H1 (cell line): ENCODE measurements at regions of chr9 and their contacts with region 1.

Region 1: GRCh38 chr9:107465467-107466451 is 23.8 kb downstream of the KLF4 start:
- DNase-seq: peak in 1 of 2 experiments; percentile 80
- H3K4me3 ChIP-seq: peak overlapping the region; percentile 47 to 75 (median 58)
- H3K27ac ChIP-seq: no peak overlapping the region
- H3K4me1 ChIP-seq: peaks cover 0 to 5% (median 5%) of the 10 kb centered on the region in 4 experiments; a peak in 4 of 7 replicates
- H3K27me3 ChIP-seq: peaks cover 0 to 19% (median 17%) of the 10 kb centered on the region in 4 experiments; a peak in 6 of 7 replicates
- CTCF ChIP-seq: peak; percentile 73 to 79 (median 76)
- EP300 ChIP-seq: no peak
- POLR2A ChIP-seq: no peak
- RAD21 ChIP-seq: peak; percentile 83 to 87

Region 2: DNA sequence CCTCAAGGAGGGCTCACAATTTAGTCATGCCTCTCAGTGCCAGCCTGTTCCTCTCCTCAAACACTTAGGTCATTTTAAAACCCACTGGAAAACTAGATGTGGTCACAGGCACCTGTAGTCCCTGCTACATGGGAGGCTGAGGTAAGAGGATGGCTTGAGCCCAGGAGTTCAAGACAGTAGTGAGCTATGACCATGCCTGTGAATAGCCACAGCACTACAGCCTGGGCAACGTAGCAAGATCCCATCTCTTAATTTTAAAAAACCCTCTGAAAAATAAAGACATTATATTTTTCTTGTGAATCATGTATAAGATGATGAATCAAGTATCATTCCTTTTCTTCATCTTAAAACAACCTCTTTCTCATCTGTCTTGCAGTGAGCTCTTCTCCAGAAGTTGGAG is 22.0 kb before region 1 on chr9:
- CTCF ChIA-PET with region 1: interaction called, 23 read pairs
- POLR2A ChIA-PET with region 1: no interaction called
- DNase-seq: no peak
- H3K4me3 ChIP-seq: no peak overlapping the region
- H3K27ac ChIP-seq: no peak overlapping the region
- H3K4me1 ChIP-seq: peaks cover under 1 to 4% (median 2%) of the 10 kb centered on the region in 4 experiments; a peak in 4 of 7 replicates
- H3K27me3 ChIP-seq: no peaks in the 10 kb centered on the region
- CTCF ChIP-seq: no peak
- EP300 ChIP-seq: no peak
- POLR2A ChIP-seq: no peak
- RAD21 ChIP-seq: no peak

Region 3: DNA sequence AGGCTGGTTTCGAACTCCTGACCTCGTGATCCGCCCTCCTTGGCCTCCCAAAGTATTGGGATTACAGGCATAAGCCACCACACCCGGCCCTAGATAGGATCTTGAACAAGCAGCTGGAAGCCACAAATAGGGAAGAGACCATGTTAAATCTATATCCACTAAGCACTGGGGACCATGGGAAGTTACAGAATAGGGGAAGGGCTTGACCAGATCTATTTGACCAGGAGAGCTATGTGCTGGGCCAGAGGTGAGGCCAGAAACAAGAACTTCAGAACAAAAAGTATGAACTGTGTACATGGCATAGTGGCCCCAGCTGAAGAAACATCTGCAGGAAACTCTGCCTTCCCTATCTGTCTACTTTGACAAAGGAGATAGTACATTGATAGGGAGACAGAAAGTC is 13.0 kb after region 1 on chr9:
- CTCF ChIA-PET with region 1: interaction called, 12 read pairs
- POLR2A ChIA-PET with region 1: no interaction called
- DNase-seq: no peak
- H3K4me3 ChIP-seq: no peak overlapping the region
- H3K27ac ChIP-seq: no peak overlapping the region
- H3K4me1 ChIP-seq: no peaks in the 10 kb centered on the region
- H3K27me3 ChIP-seq: no peaks in the 10 kb centered on the region
- CTCF ChIP-seq: no peak
- EP300 ChIP-seq: no peak
- POLR2A ChIP-seq: no peak
- RAD21 ChIP-seq: no peak

Region 4: DNA sequence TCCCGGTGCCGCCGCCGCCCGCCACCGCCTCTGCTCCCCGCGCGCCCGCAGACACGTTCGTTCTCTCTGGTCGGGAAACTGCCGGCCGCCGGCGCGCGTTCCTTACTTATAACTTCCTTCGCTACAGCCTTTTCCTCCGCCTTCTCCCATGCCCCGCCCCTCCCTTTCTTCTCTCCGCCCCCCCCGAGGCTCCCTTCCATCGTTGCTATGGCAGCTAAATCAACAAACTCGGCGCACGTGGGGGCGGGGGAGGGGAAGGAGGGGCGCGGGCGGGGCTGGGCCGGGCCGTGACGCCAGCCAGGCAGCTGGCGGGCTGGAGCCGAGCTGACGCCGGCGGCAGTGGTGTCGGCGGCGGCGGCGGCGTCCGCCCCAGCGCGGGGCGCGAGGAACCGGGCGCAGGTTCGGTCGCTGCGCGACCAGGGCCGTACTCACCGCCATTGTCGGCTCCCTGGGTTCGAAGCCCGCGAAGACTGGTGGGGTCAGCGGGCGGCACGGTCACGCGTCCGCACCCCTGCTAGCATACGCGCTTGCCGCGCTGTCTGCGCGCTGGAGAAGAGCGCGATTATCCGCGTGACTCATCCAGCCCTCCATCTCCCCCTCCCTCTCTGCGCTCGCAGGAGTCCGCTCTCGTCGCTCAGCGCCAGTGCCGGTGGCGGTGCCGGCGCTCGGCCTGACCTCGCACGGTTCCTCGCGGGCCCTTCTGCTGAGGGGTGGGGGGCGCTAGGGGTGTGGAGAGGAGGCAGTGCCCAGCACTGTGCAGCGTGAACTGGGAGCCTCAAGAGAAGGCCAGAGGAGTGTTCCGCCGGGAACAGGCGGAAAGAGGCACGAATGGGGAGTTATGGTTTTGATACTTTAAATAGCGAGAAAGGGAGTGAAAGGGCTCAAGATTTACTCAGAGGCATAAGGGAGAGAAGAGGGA is 24.2 kb after region 1 on chr9 and contains the start of gene KLF4:
- CTCF ChIA-PET with region 1: interaction called, 11 read pairs
- POLR2A ChIA-PET with region 1: no interaction called
- DNase-seq: peak; percentile 73 to 84
- H3K4me3 ChIP-seq: peak within 1 kb of the TSS; percentile 50 to 69 (median 60)
- H3K27ac ChIP-seq: 0 out of 2 replicates have a peak within 1 kb of the TSS, but pooled peaks have one; percentile 55
- H3K4me1 ChIP-seq: peaks cover 0 to 22% (median 13%) of the 10 kb centered on the region in 4 experiments; a peak in 6 of 7 replicates
- H3K27me3 ChIP-seq: peaks cover 21 to 55% (median 48%) of the 10 kb centered on the region in 4 experiments
- CTCF ChIP-seq: no peak
- EP300 ChIP-seq: no peak
- POLR2A ChIP-seq: no peak; a peak in 2 of 3 replicates
- RAD21 ChIP-seq: no peak; a peak in 1 of 4 replicates
- total RNA-seq, gene KLF4: 2.8 and 3.1 TPM in 2 replicates